Ascending aorta (tissue), 2 donors: ENCODE measurements at regions of chr10 and their contacts with region 1.

Region 1: DNA sequence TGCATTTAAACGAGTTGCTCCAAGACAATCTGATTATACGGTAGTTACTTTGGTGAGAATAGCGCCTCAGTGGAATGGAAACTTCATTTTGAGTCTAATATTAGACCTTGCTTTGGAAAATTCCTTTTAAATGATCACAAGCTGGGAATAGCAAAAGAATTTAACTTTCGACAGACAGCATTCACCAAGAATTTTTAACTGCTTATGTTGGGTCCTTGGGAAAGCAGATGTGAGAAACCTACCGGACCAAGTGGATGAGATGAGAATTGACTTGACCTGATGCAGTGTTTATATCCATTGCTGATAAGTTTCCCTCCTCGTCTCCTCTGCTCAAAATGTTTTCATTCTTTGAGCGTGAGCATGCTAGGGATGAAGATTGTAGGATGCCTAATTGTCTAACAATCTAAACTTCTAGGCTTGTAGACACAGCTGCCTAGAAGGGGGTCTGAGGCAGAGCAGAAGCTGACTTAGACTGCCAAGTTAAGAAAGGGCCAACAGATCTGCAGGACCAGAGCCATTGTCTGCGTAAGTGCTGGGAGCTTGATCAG is 126.9 kb downstream of the CNNM2 start:
- DNase-seq: no peak
- H3K4me3 ChIP-seq: peak overlapping the region; percentile 2 to 57
- H3K27ac ChIP-seq: peak overlapping the region; percentile 57 to 92
- H3K4me1 ChIP-seq: peaks cover 4 to 41% of the 10 kb centered on the region in 2 donors
- H3K27me3 ChIP-seq: no peaks in the 10 kb centered on the region
- CTCF ChIP-seq: no peak

Region 2: GRCh38 chr10:102975483-102976379 is 69.3 kb before region 1 on chr10:
- intact Hi-C with region 1: loop called (anchors 5 kb)
- DNase-seq: no peak
- H3K4me3 ChIP-seq: no peak overlapping the region
- H3K27ac ChIP-seq: peak overlapping the region in 1 of 2 donors; percentile 26
- H3K4me1 ChIP-seq: peaks cover 0 to 8% of the 10 kb centered on the region in 2 donors
- H3K27me3 ChIP-seq: no peaks in the 10 kb centered on the region
- CTCF ChIP-seq: no peak

Region 3: GRCh38 chr10:102998005-102998404 is 47.0 kb before region 1 on chr10:
- intact Hi-C with region 1: no loop called
- DNase-seq: no peak
- H3K4me3 ChIP-seq: no peak overlapping the region
- H3K27ac ChIP-seq: no peak overlapping the region
- H3K4me1 ChIP-seq: peaks cover 0 to 4% of the 10 kb centered on the region in 2 donors
- H3K27me3 ChIP-seq: no peaks in the 10 kb centered on the region
- CTCF ChIP-seq: no peak

Region 4: DNA sequence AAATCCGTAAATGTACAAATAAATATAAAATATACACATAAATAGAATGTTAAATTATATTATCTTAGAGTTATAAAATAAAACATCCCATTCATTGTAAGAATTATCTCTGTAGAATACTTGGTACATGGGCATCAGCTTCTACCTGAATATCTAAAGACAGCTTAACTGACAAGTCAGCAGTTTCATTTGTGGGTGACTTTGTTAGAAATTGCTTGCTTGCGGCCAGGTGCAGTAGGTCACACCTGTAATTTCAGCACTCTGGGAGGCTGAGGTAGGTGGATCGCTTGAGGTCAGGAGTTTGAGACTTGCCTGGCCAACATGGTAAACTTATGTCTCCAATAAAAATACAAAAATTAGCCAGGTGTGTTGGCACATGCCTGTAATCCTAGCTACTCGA is 291.4 kb after region 1 on chr10:
- intact Hi-C with region 1: no loop called
- DNase-seq: no peak
- H3K4me3 ChIP-seq: no peak overlapping the region
- H3K27ac ChIP-seq: no peak overlapping the region
- H3K4me1 ChIP-seq: no peaks in the 10 kb centered on the region
- H3K27me3 ChIP-seq: no peaks in the 10 kb centered on the region
- CTCF ChIP-seq: no peak